ENCODE measurements at regions of chr1 and their contacts with region 1.

Region 1: DNA sequence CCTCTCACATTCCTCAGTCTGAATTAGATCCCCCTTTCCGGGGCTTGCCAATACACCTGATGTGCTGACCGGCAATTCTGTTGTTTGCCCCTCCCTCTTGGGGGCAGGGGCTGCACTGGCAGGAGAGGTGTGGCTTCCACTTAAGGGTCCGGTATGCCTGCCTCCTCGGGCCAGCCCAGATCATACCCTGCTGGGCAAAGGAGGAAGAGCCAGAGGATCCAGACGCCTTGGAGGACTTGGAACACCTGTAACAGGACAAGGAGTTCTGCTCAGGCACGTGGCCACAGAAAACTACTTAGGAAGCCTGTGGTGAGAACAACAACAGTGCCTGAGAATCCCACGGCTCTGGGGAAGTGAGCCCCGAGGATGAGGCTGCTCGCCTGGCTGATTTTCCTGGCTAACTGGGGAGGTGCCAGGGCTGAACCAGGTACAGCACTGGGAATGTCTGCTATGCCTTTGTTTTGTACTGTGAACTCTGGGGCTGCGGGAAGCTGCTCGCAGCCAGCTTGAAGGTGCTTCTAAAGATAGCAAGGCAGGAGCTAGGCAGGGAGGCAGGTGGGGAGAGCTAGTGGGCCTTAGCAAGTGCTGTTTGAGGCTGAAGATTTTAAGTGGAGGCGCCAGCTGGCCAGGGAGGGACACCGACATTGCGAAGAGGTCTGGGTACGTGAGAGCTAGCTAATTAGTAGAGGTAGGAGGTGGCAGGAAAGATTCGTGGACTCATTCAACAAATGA is at the start of gene SMPDL3B:
- DNase-seq: peak; percentile 63
- H3K4me3 ChIP-seq: peak within 1 kb of the TSS; percentile 43 to 51 (median 48)
- H3K27ac ChIP-seq: no peak within 1 kb of the TSS
- H3K4me1 ChIP-seq: peaks cover 9% of the 10 kb centered on the region
- H3K27me3 ChIP-seq: no peaks in the 10 kb centered on the region
- CTCF ChIP-seq: peak; percentile 18 to 43
- total RNA-seq, gene SMPDL3B: 3.6 to 10.8 TPM

Region 2: DNA sequence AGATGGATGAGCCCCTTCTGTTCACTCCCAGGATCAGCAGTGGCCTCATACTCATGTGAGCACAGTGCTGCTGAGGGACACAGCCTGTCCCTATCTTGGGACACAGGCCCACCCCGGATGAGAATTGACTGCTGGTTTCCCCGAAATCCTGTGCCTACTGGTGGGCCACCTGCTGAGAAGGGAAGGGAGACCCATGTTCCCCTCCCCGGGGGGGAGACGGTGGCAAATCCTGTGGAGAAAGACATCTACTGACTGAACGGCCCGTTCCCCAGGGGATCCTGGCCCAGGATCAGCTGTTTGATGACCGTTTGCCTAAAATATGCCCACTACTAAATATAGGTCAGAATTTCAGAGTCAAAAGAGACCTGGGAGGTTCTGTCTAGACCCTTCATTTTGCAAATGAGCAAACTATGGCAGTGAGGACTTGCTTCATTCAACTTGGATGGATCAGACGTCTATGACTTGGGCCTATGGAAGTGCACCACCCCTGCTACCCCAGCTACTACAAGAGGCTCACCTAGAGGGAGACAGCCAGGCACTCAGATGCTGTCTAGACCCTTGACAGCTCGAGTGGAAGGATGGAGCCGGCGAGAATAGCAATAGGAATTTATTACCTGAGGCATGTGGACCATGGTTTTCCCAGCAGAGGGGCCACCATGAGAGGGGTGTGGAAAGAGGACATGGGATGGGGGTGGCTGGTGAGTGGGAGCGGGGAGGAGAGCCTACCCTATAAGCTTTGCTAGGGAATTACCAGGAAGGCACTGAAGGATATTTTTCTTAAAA is 78.2 kb before region 1 on chr1:
- CTCF ChIA-PET with region 1: no interaction called
- dilution Hi-C with region 1: no loop called
- in situ Hi-C with region 1: no loop called
- intact Hi-C with region 1: no loop called
- DNase-seq: no peak
- H3K4me3 ChIP-seq: no peak overlapping the region
- H3K27ac ChIP-seq: no peak overlapping the region
- H3K4me1 ChIP-seq: peaks cover 5% of the 10 kb centered on the region
- H3K27me3 ChIP-seq: no peaks in the 10 kb centered on the region
- CTCF ChIP-seq: no peak

Region 3: GRCh38 chr1:27959400-27960217 is 24.6 kb after region 1 on chr1 and contains the start of gene XKR8:
- CTCF ChIA-PET with region 1: no interaction called
- dilution Hi-C with region 1: no loop called
- in situ Hi-C with region 1: no loop called
- intact Hi-C with region 1: loop called (anchors 1 kb)
- DNase-seq: peak; percentile 82
- H3K4me3 ChIP-seq: peak within 1 kb of the TSS; percentile 48 to 74 (median 54)
- H3K27ac ChIP-seq: peak within 1 kb of the TSS; percentile 30
- H3K4me1 ChIP-seq: peaks cover 17% of the 10 kb centered on the region
- H3K27me3 ChIP-seq: no peaks in the 10 kb centered on the region
- CTCF ChIP-seq: peak in 1 of 2 donors; percentile 41
- total RNA-seq, gene XKR8: 4.3 to 4.5 TPM

Region 4: GRCh38 chr1:27979151-27979858 is 44.3 kb after region 1 on chr1:
- CTCF ChIA-PET with region 1: no interaction called
- dilution Hi-C with region 1: no loop called
- in situ Hi-C with region 1: no loop called
- intact Hi-C with region 1: loop called (anchors 5 kb)
- DNase-seq: peak; percentile 41
- H3K4me3 ChIP-seq: no peak overlapping the region
- H3K27ac ChIP-seq: no peak overlapping the region
- H3K4me1 ChIP-seq: no peaks in the 10 kb centered on the region
- H3K27me3 ChIP-seq: no peaks in the 10 kb centered on the region
- CTCF ChIP-seq: peak; percentile 45 to 60

Region 5: GRCh38 chr1:28036431-28036830 is 101.4 kb after region 1 on chr1:
- CTCF ChIA-PET with region 1: no interaction called
- dilution Hi-C with region 1: loop called (anchors 5 kb)
- in situ Hi-C with region 1: no loop called
- intact Hi-C with region 1: no loop called
- DNase-seq: no peak
- H3K4me3 ChIP-seq: no peak overlapping the region
- H3K27ac ChIP-seq: no peak overlapping the region
- H3K4me1 ChIP-seq: no peaks in the 10 kb centered on the region
- H3K27me3 ChIP-seq: no peaks in the 10 kb centered on the region
- CTCF ChIP-seq: peak in 1 of 2 donors; percentile 38